H1 (cell line): ENCODE measurements at regions of chr4 and their contacts with region 1.

Region 1: GRCh38 chr4:154559494-154560418 is 3.1 kb upstream of the FGB start:
- DNase-seq: peak in 1 of 2 experiments; percentile 9
- H3K4me3 ChIP-seq: no peak overlapping the region
- H3K27ac ChIP-seq: no peak overlapping the region
- H3K4me1 ChIP-seq: no peaks in the 10 kb centered on the region
- H3K27me3 ChIP-seq: no peaks in the 10 kb centered on the region
- CTCF ChIP-seq: peak in 2 of 3 experiments; percentile 82 to 85; a peak in 3 of 4 replicates
- EP300 ChIP-seq: no peak
- POLR2A ChIP-seq: no peak
- RAD21 ChIP-seq: peak; percentile 93 to 94

Region 2: GRCh38 chr4:154578919-154579318 is 19.2 kb after region 1 on chr4:
- CTCF ChIA-PET with region 1: interaction called, 14 read pairs
- POLR2A ChIA-PET with region 1: no interaction called
- DNase-seq: no peak
- H3K4me3 ChIP-seq: no peak overlapping the region
- H3K27ac ChIP-seq: no peak overlapping the region
- H3K4me1 ChIP-seq: no peaks in the 10 kb centered on the region
- H3K27me3 ChIP-seq: no peaks in the 10 kb centered on the region
- CTCF ChIP-seq: no peak
- EP300 ChIP-seq: no peak
- POLR2A ChIP-seq: no peak
- RAD21 ChIP-seq: no peak

Region 3: DNA sequence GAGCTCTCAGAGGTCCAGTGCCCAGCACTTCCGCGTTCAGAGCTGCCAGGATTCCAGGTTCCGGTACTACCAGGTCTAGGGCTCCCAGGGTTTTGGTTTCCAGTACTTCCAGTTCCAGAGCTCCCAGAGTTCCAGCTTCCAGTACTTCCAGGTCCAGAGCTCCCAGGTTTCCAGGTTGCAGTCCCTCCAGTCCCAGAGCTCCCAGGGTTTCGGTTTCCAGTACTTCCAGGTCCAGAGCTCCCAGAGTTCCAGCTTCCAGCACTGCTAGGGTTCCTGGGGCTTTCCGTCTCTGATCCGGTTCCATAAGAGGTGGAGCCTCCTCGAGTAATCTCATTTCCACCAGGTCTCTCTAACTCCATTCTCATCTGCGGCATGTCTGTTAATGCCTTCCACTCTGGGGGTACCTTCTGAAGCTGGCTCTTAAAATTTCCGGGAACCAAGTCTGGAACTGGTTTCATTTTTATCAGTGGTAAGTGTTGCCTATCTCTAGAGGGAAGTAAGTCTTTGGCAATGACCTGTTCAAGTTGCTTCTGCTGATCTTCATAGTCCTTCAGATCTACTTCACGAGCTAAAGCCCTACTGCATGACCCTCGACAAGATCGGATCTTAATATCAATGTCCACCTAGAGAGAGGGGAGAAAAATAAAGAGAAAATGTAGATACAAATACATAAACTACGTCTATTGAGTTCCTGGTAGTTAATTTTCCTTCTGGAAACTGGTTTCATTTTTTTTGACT is 26.7 kb after region 1 on chr4:
- CTCF ChIA-PET with region 1: interaction called, 30 read pairs
- POLR2A ChIA-PET with region 1: no interaction called
- DNase-seq: no peak
- H3K4me3 ChIP-seq: no peak overlapping the region
- H3K27ac ChIP-seq: no peak overlapping the region
- H3K4me1 ChIP-seq: 0 out of 7 replicates have a peak, but pooled peaks cover 0 to 3% (median 0%) of the 10 kb centered on the region in 4 experiments
- H3K27me3 ChIP-seq: no peaks in the 10 kb centered on the region
- CTCF ChIP-seq: no peak
- EP300 ChIP-seq: no peak
- POLR2A ChIP-seq: no peak
- RAD21 ChIP-seq: no peak

Region 4: GRCh38 chr4:154595807-154596206 is 36.1 kb after region 1 on chr4:
- CTCF ChIA-PET with region 1: interaction called, 30 read pairs
- POLR2A ChIA-PET with region 1: no interaction called
- DNase-seq: no peak
- H3K4me3 ChIP-seq: no peak overlapping the region
- H3K27ac ChIP-seq: no peak overlapping the region
- H3K4me1 ChIP-seq: no peaks in the 10 kb centered on the region
- H3K27me3 ChIP-seq: no peaks in the 10 kb centered on the region
- CTCF ChIP-seq: no peak
- EP300 ChIP-seq: no peak
- POLR2A ChIP-seq: no peak
- RAD21 ChIP-seq: no peak

Region 5: GRCh38 chr4:154602404-154603020 is 42.8 kb after region 1 on chr4:
- CTCF ChIA-PET with region 1: interaction called, 16 read pairs
- POLR2A ChIA-PET with region 1: no interaction called
- DNase-seq: no peak
- H3K4me3 ChIP-seq: no peak overlapping the region
- H3K27ac ChIP-seq: no peak overlapping the region
- H3K4me1 ChIP-seq: peaks cover 0 to 3% (median 0%) of the 10 kb centered on the region in 4 experiments; a peak in 1 of 7 replicates
- H3K27me3 ChIP-seq: no peaks in the 10 kb centered on the region
- CTCF ChIP-seq: no peak
- EP300 ChIP-seq: no peak
- POLR2A ChIP-seq: no peak
- RAD21 ChIP-seq: no peak